Natural killer cell (primary cell): ENCODE measurements at regions of chr9 and their contacts with region 1.

Region 1: DNA sequence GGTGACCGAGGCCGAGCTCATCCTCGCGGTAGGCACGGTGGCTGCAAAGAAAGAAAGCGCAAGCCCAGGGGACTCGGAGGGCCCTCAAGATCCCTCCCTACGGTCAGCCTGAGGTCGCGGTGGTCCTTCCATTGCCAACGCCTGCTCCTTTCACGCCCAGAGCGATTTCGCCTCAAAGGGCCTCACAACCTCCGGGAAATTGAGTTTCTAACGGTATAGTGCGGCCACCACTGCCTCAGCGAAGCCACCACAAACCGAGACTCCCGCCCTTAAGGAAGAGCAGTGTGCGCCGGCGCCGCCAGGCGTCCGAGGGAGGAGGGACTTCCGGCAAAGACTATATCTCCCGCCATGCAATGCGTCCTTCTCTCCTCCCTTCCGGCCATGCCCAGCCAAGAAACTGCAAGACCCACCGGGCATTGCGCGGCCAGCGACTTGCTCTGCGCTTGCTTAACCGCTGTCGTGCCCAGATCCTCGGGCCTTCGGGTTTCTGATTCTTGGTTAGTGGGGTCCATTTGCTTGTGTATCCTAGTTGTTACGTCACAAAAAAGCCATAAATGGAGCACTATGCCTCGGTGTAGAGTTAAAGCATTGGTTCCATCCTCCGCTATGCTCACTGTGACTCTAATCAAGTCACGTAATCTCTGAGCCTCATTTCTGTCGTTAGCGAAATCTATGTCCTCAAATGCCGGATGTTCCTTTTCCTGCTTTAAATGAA is at the start of gene HAUS6:
- DNase-seq: peak; percentile 88 to 98
- ATAC-seq: peak; percentile 95 to 99 (median 96)
- H3K4me3 ChIP-seq: peak within 1 kb of the TSS; percentile 63
- H3K4me3 Mint-ChIP-seq: peak within 1 kb of the TSS; percentile 98
- H3K27ac ChIP-seq: peak within 1 kb of the TSS; percentile 71
- H3K27ac Mint-ChIP-seq: peak within 1 kb of the TSS; percentile 90 to 95
- H3K4me1 ChIP-seq: peaks cover 19% of the 10 kb centered on the region
- H3K4me1 Mint-ChIP-seq: peaks cover 19 to 27% of the 10 kb centered on the region in 2 donors
- H3K27me3 ChIP-seq: no peaks in the 10 kb centered on the region
- H3K27me3 Mint-ChIP-seq: no peaks in the 10 kb centered on the region
- CTCF ChIP-seq: no peak
- total RNA-seq, gene HAUS6: 14.6 to 18.3 (median 14.9) TPM

Region 2: DNA sequence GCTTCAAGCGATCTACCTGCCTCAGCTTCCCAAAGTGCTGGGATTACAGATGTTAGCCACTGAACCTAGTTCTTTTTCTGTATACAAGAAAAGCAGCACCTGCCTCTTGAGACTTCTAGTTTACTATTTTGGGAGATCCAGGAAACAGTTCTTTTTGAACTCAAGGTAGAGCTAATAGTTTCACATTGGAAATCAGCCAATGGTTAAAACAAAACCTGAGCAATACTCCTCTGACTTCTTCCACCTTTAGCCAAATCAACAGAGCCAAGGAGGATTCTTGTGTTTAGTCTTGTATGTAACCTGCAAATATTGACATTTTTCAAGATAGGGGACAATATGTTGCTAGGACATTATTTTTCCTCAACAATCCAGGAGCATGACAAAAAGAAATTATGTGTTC is 1174.6 kb before region 1 on chr9:
- intact Hi-C with region 1: no loop called
- DNase-seq: no peak
- ATAC-seq: no peak
- H3K4me3 ChIP-seq: no peak overlapping the region
- H3K4me3 Mint-ChIP-seq: no peak overlapping the region
- H3K27ac ChIP-seq: no peak overlapping the region
- H3K27ac Mint-ChIP-seq: no peak overlapping the region
- H3K4me1 ChIP-seq: no peaks in the 10 kb centered on the region
- H3K4me1 Mint-ChIP-seq: no peaks in the 10 kb centered on the region
- H3K27me3 ChIP-seq: no peaks in the 10 kb centered on the region
- H3K27me3 Mint-ChIP-seq: no peaks in the 10 kb centered on the region
- CTCF ChIP-seq: no peak

Region 3: GRCh38 chr9:19048966-19049916 is 53.5 kb before region 1 on chr9 and contains the start of gene RRAGA:
- intact Hi-C with region 1: loop called (anchors 1 kb)
- DNase-seq: peak; percentile 94 to 97
- ATAC-seq: peak; percentile 92 to 96 (median 93)
- H3K4me3 ChIP-seq: peak within 1 kb of the TSS; percentile 77
- H3K4me3 Mint-ChIP-seq: peak within 1 kb of the TSS; percentile 94
- H3K27ac ChIP-seq: peak within 1 kb of the TSS; percentile 82
- H3K27ac Mint-ChIP-seq: peak within 1 kb of the TSS; percentile 95 to 96
- H3K4me1 ChIP-seq: peaks cover 20% of the 10 kb centered on the region
- H3K4me1 Mint-ChIP-seq: peaks cover 30 to 33% of the 10 kb centered on the region in 2 donors
- H3K27me3 ChIP-seq: no peaks in the 10 kb centered on the region
- H3K27me3 Mint-ChIP-seq: no peaks in the 10 kb centered on the region
- CTCF ChIP-seq: peak; percentile 69
- total RNA-seq, gene RRAGA: 39.0 to 43.9 (median 41.5) TPM

Region 4: DNA sequence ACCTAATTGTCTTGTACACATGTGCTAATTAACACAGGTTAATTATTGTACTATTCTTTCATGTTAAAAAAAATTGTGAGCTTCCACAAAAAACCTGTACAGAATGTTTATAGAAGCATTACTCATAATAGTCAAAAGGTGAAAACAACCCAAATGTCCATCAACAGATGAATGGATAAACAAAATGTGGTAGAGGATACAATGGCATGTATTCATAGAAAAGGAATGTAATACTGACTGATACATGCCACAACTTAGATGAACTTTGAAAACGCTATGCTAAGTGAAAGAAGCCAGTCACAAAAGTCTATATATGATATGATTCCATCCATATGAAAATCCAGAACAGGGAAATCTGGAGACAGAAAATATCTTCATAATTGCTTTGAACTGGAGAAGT is 28.0 kb before region 1 on chr9:
- intact Hi-C with region 1: no loop called
- DNase-seq: no peak
- ATAC-seq: no peak
- H3K4me3 ChIP-seq: no peak overlapping the region
- H3K4me3 Mint-ChIP-seq: no peak overlapping the region
- H3K27ac ChIP-seq: no peak overlapping the region
- H3K27ac Mint-ChIP-seq: peak overlapping the region in 1 of 2 donors; percentile 3
- H3K4me1 ChIP-seq: no peaks in the 10 kb centered on the region
- H3K4me1 Mint-ChIP-seq: peaks cover 6 to 9% of the 10 kb centered on the region in 2 donors
- H3K27me3 ChIP-seq: no peaks in the 10 kb centered on the region
- H3K27me3 Mint-ChIP-seq: no peaks in the 10 kb centered on the region
- CTCF ChIP-seq: no peak

Region 5: GRCh38 chr9:19127881-19128500 is 25.2 kb after region 1 on chr9:
- intact Hi-C with region 1: loop called (anchors 2 kb)
- DNase-seq: peak; percentile 37 to 60
- ATAC-seq: peak; percentile 20 to 29 (median 21)
- H3K4me3 ChIP-seq: peak overlapping the region; percentile 86
- H3K4me3 Mint-ChIP-seq: peak overlapping the region; percentile 92
- H3K27ac ChIP-seq: peak overlapping the region; percentile 71
- H3K27ac Mint-ChIP-seq: peak overlapping the region; percentile 86 to 93
- H3K4me1 ChIP-seq: peaks cover 36% of the 10 kb centered on the region
- H3K4me1 Mint-ChIP-seq: peaks cover 23 to 39% of the 10 kb centered on the region in 2 donors
- H3K27me3 ChIP-seq: no peaks in the 10 kb centered on the region
- H3K27me3 Mint-ChIP-seq: no peaks in the 10 kb centered on the region
- CTCF ChIP-seq: no peak

Region 6: DNA sequence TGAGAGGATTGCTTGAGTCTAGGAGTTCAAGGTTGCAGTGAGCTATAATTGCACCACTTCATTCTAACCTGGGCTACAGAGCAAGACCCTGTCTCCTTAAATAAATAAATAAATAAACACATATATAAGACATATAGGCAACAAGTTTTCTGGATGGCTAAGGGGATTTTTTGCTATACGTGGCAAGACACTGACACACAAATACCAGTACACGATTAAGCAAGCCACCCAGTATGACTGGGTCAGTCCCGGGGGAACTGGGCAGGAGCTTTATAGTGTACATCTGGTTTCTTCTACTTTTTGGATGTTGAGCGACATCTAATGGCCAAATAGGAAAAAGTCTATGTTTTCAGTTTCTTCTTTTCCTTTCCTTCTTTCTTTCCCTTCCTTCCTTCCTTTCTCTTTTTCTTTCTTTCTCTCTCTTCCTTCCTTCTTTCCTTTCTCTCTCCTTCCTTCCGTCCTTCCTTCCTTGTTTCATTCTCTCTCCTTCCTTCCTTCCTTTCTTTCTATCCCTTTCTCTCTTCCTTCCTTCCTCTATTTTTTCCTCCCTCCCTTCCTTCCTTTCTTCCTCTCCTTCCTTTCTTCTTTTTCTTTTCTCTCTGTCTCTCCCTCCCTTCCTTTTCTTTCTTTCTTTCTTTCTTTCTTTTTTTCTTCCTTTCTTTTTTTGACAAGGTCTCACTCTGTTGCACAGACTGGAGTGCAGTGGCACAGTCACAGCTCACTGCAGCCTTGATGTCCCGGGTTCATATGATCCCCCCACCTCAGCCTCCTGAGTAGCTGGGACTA is 71.5 kb after region 1 on chr9:
- intact Hi-C with region 1: loop called (anchors 2 kb)
- DNase-seq: peak; percentile 34 to 67
- ATAC-seq: peak; percentile 88 to 95 (median 95)
- H3K4me3 ChIP-seq: no peak overlapping the region
- H3K4me3 Mint-ChIP-seq: peak overlapping the region; percentile 43
- H3K27ac ChIP-seq: no peak overlapping the region
- H3K27ac Mint-ChIP-seq: peak overlapping the region; percentile 60 to 71
- H3K4me1 ChIP-seq: peaks cover 7% of the 10 kb centered on the region
- H3K4me1 Mint-ChIP-seq: peaks cover 11 to 25% of the 10 kb centered on the region in 2 donors
- H3K27me3 ChIP-seq: no peaks in the 10 kb centered on the region
- H3K27me3 Mint-ChIP-seq: no peaks in the 10 kb centered on the region
- CTCF ChIP-seq: peak; percentile 72

Region 7: DNA sequence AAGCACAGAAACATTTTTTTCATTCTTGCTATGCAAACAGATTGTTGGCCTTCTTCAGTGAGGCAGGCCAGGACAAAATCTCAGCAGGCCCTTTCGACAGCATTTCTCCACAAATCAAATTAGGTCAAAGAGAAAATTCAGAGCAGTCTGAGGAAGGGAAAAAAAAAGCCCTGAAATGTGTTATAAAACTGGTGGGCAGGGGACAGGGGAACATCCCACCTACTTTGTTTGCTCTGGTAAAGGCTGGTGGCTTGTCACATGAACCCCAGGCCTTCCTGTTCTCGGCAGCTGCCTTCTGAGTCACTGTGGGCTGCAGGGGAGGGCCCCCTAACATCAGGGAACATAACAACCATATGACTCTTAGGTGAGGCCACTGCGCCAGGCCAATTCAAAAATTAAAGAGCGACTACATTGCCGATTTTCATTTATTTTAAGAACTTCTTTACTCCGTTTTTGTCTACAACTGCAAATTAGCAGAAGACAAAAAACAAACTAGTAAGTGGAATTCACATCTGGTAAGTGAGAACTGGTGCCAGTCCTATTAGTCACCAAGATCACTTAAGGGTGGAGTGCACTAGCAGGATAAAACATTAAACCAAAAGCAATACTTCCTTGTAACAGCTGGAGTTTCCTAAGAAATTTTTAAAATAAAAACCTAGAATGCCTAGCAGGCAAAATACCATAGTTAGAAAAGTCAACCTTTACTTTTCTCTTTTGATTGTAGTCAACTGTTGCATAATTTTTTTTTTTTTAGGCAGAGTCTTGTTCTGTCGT is 81.5 kb after region 1 on chr9:
- intact Hi-C with region 1: loop called (anchors 1 kb)
- DNase-seq: peak; percentile 81 to 88
- ATAC-seq: peak; percentile 85 to 98 (median 98)
- H3K4me3 ChIP-seq: no peak overlapping the region
- H3K4me3 Mint-ChIP-seq: peak overlapping the region; percentile 72
- H3K27ac ChIP-seq: peak overlapping the region; percentile 84
- H3K27ac Mint-ChIP-seq: peak overlapping the region; percentile 96 to 97
- H3K4me1 ChIP-seq: peaks cover 56% of the 10 kb centered on the region
- H3K4me1 Mint-ChIP-seq: peaks cover 26 to 32% of the 10 kb centered on the region in 2 donors
- H3K27me3 ChIP-seq: no peaks in the 10 kb centered on the region
- H3K27me3 Mint-ChIP-seq: no peaks in the 10 kb centered on the region
- CTCF ChIP-seq: no peak

Region 8: DNA sequence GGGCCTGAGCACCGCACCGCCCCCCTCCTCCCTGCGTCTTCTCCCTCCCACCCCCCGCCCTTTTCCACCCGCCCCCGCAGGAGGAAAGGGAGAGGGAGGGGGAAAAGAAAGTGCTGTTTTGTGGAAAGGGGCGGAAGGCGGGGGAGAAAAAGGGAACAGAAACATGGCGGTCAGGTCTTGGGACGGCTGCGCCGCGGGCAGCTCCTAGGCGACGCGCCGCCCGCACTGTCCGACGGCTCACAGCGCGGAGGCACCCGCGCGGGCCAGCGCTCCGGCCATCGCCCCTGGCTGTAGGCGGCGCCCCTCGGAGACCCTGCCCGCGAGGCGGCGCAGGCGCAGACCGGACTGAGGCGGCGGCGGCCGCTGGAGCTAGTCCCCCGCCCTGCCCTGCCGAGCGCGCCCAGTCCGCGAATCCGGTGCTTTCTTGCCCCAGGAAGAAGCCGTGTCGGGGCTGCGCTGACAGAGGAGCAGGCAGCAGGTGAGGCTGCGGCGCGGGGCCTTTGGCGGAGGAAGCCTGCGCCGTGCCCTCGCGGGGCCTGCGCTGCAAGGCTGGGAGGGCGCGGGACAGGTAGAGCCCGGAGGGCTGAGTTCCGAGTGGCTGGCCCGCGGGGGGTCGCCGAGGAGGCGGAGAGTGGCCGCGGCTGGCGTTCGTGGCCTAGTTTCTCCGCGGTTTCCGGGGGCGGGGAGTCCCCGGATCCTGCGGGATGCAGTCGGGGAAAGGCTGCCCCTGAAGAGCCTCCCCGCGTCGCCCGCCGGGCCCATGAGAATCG is 127.8 kb after region 1 on chr9 and contains the start of gene DENND4C:
- intact Hi-C with region 1: loop called (anchors 1 kb)
- DNase-seq: peak; percentile 72 to 89
- ATAC-seq: peak; percentile 78 to 89 (median 81)
- H3K4me3 ChIP-seq: peak within 1 kb of the TSS; percentile 49
- H3K4me3 Mint-ChIP-seq: peak within 1 kb of the TSS; percentile 84
- H3K27ac ChIP-seq: peak within 1 kb of the TSS; percentile 65
- H3K27ac Mint-ChIP-seq: no peak within 1 kb of the TSS
- H3K4me1 ChIP-seq: peaks cover 10% of the 10 kb centered on the region
- H3K4me1 Mint-ChIP-seq: peaks cover 8 to 15% of the 10 kb centered on the region in 2 donors
- H3K27me3 ChIP-seq: no peaks in the 10 kb centered on the region
- H3K27me3 Mint-ChIP-seq: no peaks in the 10 kb centered on the region
- CTCF ChIP-seq: no peak
- total RNA-seq, gene DENND4C: 82.6 to 115 (median 100) TPM

Region 9: DNA sequence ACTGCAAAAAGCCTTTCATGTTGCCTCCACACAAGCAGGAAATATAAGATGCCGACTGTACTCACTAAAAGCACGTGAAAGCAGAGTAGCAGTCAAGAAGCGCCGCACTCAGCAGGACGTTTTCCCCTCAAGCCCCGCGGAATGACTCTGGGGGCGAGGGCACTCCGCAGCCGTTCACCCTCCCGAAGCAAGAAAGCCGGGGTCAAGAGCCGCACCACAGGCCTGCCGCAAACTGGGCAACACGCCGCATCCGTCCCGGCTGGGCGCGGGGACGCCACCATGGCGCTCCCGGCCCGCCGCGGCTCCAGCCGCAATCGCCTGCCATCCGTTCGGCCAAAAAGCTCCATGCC is 276.9 kb after region 1 on chr9:
- intact Hi-C with region 1: loop called (anchors 1 kb)
- DNase-seq: peak in 1 of 2 donors; percentile 72
- ATAC-seq: peak; percentile 41 to 58 (median 50)
- H3K4me3 ChIP-seq: peak overlapping the region; percentile 72
- H3K4me3 Mint-ChIP-seq: peak overlapping the region; percentile 96
- H3K27ac ChIP-seq: peak overlapping the region; percentile 88
- H3K27ac Mint-ChIP-seq: peak overlapping the region; percentile 93 to 99
- H3K4me1 ChIP-seq: peaks cover 17% of the 10 kb centered on the region
- H3K4me1 Mint-ChIP-seq: peaks cover 36 to 46% of the 10 kb centered on the region in 2 donors
- H3K27me3 ChIP-seq: no peaks in the 10 kb centered on the region
- H3K27me3 Mint-ChIP-seq: no peaks in the 10 kb centered on the region
- CTCF ChIP-seq: no peak